Activated CD4-positive, alpha-beta T cell treated with anti-CD3 and anti-CD28 coated beads, Interleukin-2, amount 10 ng/mL, durations not matched to agents 24 days and 14 days (primary cell): ENCODE measurements at regions of chr2 and their contacts with region 1.

Region 1: DNA sequence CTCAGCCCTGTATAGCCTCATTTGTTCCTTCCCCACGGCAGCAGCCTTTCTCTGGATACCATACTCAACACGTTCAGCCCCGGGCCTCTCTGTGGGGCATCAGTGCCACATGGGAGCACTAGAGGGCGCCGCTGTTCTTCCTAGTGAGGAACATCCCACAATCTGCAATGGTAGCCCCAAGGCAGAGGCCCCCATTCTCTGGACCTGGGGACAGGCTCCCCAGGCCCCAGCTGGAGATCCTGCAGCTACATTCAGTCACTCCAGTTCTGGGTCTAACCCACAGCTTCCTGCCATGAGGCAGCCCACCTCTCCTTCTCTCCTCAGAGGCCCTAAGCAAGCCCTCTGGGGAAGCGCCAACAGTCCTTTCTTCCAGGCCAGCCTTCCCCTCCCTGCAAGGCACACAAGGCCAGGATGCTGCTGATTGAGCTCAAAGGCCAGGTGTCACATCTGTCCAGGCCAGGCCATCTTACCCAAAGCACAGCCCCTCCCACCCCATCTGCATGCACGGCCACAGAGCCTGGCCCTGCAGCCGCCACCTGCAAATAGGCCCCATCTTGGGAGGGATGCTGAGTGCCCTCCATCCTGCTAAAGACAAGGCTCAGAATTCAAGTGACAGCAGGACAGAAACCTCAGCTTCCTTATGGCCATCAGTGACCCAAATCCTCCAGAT is 14.3 kb upstream of the SFXN5 start:
- DNase-seq: peak; percentile 95
- H3K4me3 Mint-ChIP-seq: no peak overlapping the region
- H3K27ac Mint-ChIP-seq: no peak overlapping the region
- H3K4me1 Mint-ChIP-seq: peaks cover 4% of the 10 kb centered on the region
- H3K27me3 Mint-ChIP-seq: no peaks in the 10 kb centered on the region

Region 2: GRCh38 chr2:73156539-73157124 is 70.8 kb after region 1 on chr2:
- intact Hi-C with region 1: loop called (anchors 1 kb)
- DNase-seq: peak; percentile 75
- H3K4me3 Mint-ChIP-seq: no peak overlapping the region
- H3K27ac Mint-ChIP-seq: no peak overlapping the region
- H3K4me1 Mint-ChIP-seq: no peaks in the 10 kb centered on the region
- H3K27me3 Mint-ChIP-seq: peaks cover 29% of the 10 kb centered on the region

Region 3: DNA sequence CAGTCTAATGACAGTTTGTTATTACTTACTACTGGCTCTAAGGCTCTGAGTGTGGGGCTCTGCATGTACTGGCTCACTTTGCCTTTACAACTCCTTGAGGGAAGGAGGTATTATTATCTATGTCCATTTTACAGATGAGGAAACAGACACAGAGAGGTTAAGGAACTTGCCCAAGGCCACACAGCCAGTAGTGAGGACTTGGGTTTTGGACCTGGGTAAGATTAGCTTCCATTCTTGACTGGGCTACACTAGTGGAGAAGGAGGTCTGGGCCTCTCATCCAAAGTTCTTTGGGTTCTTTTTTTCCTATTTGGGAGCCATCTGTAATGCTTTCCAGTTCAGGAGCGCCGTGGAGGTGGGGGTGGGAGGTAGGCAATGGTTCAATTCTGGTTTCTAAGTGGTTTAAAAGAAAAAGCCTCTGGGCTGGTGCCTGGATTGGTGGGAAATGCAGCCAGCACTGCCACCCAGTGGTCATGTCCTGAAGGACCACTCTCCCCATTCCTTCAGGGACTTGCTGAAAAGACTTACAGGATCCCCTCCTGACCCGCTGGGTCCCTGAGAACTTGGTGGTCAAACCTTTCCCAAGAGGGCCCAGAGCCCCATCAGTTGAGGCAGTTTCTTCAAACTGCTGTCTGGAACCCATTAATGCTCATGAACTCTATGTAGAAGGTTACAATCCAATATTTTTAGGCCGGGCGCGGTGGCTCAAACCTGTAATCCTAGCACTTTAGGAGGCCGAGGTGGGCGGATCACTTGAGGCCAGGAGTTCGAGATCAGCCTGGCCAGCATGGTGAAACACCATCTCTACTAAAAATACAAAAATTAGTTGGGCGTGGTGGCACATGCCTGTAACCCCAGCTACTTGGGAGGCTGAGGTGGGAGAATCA is 77.9 kb after region 1 on chr2:
- intact Hi-C with region 1: loop called (anchors 1 kb)
- DNase-seq: peak; percentile 89
- H3K4me3 Mint-ChIP-seq: no peak overlapping the region
- H3K27ac Mint-ChIP-seq: no peak overlapping the region
- H3K4me1 Mint-ChIP-seq: peaks cover 1% of the 10 kb centered on the region
- H3K27me3 Mint-ChIP-seq: peaks cover 9% of the 10 kb centered on the region